H1 (cell line): ENCODE measurements at regions of chr3 and their contacts with region 1.

Region 1: DNA sequence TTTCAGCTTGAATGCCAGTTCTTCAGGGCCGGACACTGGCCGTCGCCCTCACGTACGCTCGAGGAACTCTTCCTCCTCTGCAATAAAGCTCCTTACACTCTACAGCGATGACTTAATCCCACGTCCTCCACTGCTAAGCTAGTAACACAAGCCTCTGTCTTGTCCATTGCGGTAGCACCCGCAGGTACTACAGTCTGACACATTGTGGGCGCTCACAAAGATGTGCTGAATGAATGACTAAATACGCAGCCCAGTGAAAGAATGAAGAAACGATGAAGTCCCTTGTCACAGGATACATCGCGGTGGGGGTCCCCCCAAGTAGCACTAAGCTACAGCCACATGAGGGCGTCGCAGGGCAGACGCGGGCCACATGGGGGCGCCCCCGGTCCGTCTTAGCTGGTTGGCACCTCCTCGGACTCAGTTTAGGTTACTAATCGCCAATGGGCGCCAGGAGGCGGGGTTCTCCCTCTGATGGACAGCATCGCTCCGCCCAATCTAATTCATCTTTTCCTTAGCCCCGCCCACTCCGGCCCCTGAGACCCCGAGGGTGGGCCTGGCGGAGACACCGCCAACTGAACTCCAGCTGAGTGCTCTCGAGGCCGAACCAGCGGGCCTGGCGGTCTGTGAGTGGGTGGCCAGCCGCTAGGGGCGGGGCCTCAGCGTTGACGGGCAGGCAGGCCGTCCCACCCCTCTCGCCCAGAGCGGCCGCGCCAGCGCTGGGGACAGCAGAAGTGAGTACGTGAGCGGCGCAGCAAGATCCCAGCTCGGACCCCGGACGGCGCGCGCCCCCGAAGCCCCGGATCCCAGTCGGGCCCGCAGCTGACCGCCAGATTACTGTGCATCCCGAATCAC is at the start of gene EPHB3:
- DNase-seq: peak; percentile 99 to 100
- H3K4me3 ChIP-seq: peak within 1 kb of the TSS; percentile 13 to 63 (median 38); a peak in 7 of 8 replicates
- H3K27ac ChIP-seq: no peak within 1 kb of the TSS
- H3K4me1 ChIP-seq: peaks cover 17 to 41% (median 38%) of the 10 kb centered on the region in 4 experiments
- H3K27me3 ChIP-seq: peaks cover 52 to 83% (median 79%) of the 10 kb centered on the region in 4 experiments
- CTCF ChIP-seq: peak in 2 of 3 experiments; percentile 96 to 100; a peak in 3 of 4 replicates
- EP300 ChIP-seq: no peak
- POLR2A ChIP-seq: 0 out of 3 replicates have a peak, but pooled peaks of 1 of the 2 experiments have one; percentile 46
- RAD21 ChIP-seq: peak; percentile 98
- total RNA-seq, gene EPHB3: 0.80 and 0.91 TPM in 2 replicates

Region 2: DNA sequence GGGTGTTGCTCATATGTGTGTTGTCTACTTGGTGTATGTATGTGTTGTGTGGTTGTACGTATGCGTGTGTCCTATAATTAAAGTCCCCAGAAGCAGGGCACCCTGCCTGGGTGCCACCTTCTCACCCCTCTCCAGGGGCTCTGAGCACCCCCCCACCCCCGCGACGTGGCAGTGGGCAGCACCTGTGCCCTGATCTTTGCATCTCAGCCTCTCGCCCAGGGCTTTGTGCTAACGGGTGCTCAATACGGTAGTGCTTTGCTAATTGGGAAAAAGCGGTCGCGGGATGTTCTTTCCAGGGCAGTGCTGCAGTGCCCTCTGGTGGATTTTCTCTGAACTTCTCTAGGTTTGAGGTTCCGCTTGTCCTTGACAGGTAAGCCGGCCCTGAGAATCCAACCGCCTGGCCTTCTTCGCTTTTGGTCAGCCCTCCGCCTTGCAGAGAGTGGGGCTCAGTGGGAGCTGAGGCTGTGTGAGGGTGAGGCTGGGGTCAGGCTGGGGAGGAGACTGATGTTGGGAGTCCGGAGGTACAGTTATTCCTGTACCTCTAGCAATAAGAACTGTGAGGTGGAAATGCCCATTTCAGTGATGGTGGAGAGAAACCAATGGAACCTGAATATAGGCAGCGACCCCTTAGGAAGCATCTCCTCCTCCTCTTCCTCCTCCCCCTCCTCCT is 17.3 kb before region 1 on chr3:
- CTCF ChIA-PET with region 1: interaction called, 14 read pairs
- POLR2A ChIA-PET with region 1: no interaction called
- DNase-seq: peak in 1 of 2 experiments; percentile 94
- H3K4me3 ChIP-seq: no peak overlapping the region
- H3K27ac ChIP-seq: no peak overlapping the region
- H3K4me1 ChIP-seq: peaks cover 0 to 5% (median under 1%) of the 10 kb centered on the region in 4 experiments; a peak in 3 of 7 replicates
- H3K27me3 ChIP-seq: peaks cover 0 to 3% (median 0%) of the 10 kb centered on the region in 4 experiments; a peak in 1 of 7 replicates
- CTCF ChIP-seq: peak; percentile 56 to 94 (median 81)
- EP300 ChIP-seq: no peak
- POLR2A ChIP-seq: no peak
- RAD21 ChIP-seq: peak; percentile 94 to 96

Region 3: GRCh38 chr3:184592371-184593219 is 31.3 kb after region 1 on chr3:
- CTCF ChIA-PET with region 1: interaction called, 17 read pairs
- POLR2A ChIA-PET with region 1: interaction called, 3 read pairs
- DNase-seq: no peak
- H3K4me3 ChIP-seq: no peak overlapping the region
- H3K27ac ChIP-seq: no peak overlapping the region
- H3K4me1 ChIP-seq: peaks cover 4 to 40% (median 13%) of the 10 kb centered on the region in 4 experiments
- H3K27me3 ChIP-seq: peaks cover 0 to 21% (median 20%) of the 10 kb centered on the region in 4 experiments; a peak in 6 of 7 replicates
- CTCF ChIP-seq: no peak
- EP300 ChIP-seq: no peak
- POLR2A ChIP-seq: no peak
- RAD21 ChIP-seq: no peak

Region 4: GRCh38 chr3:184659797-184660306 is 98.6 kb after region 1 on chr3:
- CTCF ChIA-PET with region 1: interaction called, 11 read pairs
- POLR2A ChIA-PET with region 1: interaction called, 3 read pairs
- DNase-seq: no peak
- H3K4me3 ChIP-seq: no peak overlapping the region
- H3K27ac ChIP-seq: no peak overlapping the region
- H3K4me1 ChIP-seq: peaks cover 14 to 45% (median 26%) of the 10 kb centered on the region in 4 experiments
- H3K27me3 ChIP-seq: no peaks in the 10 kb centered on the region; a peak in 1 of 7 replicates
- CTCF ChIP-seq: no peak
- EP300 ChIP-seq: no peak
- POLR2A ChIP-seq: no peak
- RAD21 ChIP-seq: peak in 1 of 2 experiments; percentile 18; a peak in 1 of 4 replicates

Region 5: DNA sequence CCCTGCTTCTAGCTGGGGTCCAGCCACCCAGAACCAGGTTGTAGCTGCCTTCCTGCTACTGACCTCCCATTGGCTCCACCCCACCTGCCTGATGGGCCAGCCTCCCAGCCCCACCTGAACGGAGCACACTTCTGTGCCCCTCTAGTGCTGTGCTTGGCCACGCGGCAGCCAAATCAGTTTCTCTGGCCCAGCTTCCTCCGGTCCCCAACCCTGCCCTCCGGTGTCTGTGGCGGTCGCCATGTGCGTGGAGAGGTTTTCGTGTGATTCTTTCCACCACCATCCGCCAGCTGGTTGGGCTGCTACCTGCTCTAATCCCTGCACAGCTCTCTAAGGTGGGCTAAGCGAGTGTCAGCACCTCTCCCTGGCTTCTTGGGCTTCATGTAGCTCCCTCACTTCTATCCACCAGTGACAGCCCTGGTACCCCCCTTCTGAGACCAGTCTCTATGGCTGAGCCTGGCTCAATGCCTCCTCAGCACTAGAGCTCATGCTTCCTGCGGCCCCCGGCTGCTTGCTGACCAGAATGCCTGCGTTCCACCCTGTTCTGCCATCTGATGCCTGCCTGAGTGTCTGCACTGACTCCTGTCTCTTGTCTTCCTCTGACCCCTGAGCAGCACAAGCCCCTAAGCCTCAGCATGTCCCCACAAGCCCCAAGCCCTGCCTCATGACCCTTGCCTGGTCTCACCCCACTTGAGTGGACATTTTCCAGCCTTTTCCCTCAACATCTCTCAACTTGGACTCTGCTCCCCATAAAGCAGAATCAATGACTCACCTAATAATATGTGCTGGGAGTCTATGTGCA is 173.8 kb after region 1 on chr3:
- CTCF ChIA-PET with region 1: interaction called, 26 read pairs
- POLR2A ChIA-PET with region 1: no interaction called
- DNase-seq: peak in 1 of 2 experiments; percentile 45
- H3K4me3 ChIP-seq: no peak overlapping the region
- H3K27ac ChIP-seq: no peak overlapping the region
- H3K4me1 ChIP-seq: no peaks in the 10 kb centered on the region
- H3K27me3 ChIP-seq: no peaks in the 10 kb centered on the region
- CTCF ChIP-seq: no peak
- EP300 ChIP-seq: no peak
- POLR2A ChIP-seq: no peak
- RAD21 ChIP-seq: no peak

Region 6: GRCh38 chr3:184842433-184842832 is 281.1 kb after region 1 on chr3:
- CTCF ChIA-PET with region 1: no interaction called
- POLR2A ChIA-PET with region 1: no interaction called
- DNase-seq: no peak
- H3K4me3 ChIP-seq: no peak overlapping the region
- H3K27ac ChIP-seq: no peak overlapping the region
- H3K4me1 ChIP-seq: no peaks in the 10 kb centered on the region
- H3K27me3 ChIP-seq: peaks cover 0 to 1% (median 0%) of the 10 kb centered on the region in 4 experiments; a peak in 1 of 7 replicates
- CTCF ChIP-seq: no peak
- EP300 ChIP-seq: no peak
- POLR2A ChIP-seq: no peak
- RAD21 ChIP-seq: no peak